Colonic mucosa (tissue), 4 donors: ENCODE measurements at regions of chr1 and their contacts with region 1.

Region 1: GRCh38 chr1:236103646-236104218 is 38.6 kb upstream of the GPR137B start:
- DNase-seq: peak; percentile 65
- H3K4me3 ChIP-seq: no peak overlapping the region
- H3K27ac ChIP-seq: no peak overlapping the region
- H3K4me1 ChIP-seq: no peaks in the 10 kb centered on the region
- H3K27me3 ChIP-seq: no peaks in the 10 kb centered on the region
- CTCF ChIP-seq: peak; percentile 90

Region 2: GRCh38 chr1:236451796-236452373 is 348.2 kb after region 1 on chr1:
- intact Hi-C with region 1: loop called (anchors 2 kb)
- DNase-seq: peak; percentile 37
- H3K4me3 ChIP-seq: no peak overlapping the region
- H3K27ac ChIP-seq: no peak overlapping the region
- H3K4me1 ChIP-seq: no peaks in the 10 kb centered on the region
- H3K27me3 ChIP-seq: no peaks in the 10 kb centered on the region
- CTCF ChIP-seq: peak; percentile 57

Region 3: GRCh38 chr1:236868625-236869467 is 765.1 kb after region 1 on chr1:
- intact Hi-C with region 1: loop called (anchors 5 kb)
- DNase-seq: peak; percentile 30
- H3K4me3 ChIP-seq: no peak overlapping the region
- H3K27ac ChIP-seq: no peak overlapping the region
- H3K4me1 ChIP-seq: no peaks in the 10 kb centered on the region
- H3K27me3 ChIP-seq: no peaks in the 10 kb centered on the region
- CTCF ChIP-seq: peak; percentile 94